Activated naive CD4-positive, alpha-beta T cell treated with anti-CD3 and anti-CD28 coated beads for 36 hours (primary cell): ENCODE measurements at regions of chr14 and their contacts with region 1.

Region 1: DNA sequence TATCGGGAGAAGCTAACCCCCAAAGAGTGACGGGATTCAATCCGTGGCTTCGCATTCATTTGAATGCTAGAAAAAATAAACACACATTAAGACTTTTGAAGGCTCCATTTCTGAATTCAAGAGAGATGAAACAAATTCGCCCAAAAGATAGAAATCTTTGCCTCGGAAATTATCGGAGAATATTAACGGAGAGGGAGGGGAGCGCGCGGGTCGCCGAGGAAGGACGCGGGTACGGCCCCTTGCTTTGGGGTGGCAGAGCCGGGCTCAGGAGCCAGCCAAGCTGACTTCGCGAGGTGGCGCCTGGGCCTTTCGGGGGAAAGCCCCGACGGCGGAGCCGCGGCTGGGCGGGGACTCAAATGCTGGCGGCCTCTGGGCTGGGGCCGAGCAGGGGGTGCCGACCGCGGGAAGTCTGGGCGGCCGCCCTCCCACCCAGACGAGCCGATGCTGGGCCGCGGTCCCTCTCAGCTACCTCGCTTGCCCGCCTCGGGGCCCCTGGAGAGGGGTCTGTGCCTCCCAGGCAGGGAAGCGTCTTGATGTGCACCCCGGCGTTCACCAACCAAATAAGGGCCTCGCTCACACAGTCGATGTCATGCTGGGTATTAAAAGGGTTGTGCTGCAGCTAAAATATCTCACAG is 14.7 kb downstream of the NKX2-1 start:
- DNase-seq: no peak
- H3K4me3 Mint-ChIP-seq: peak overlapping the region; percentile 11
- H3K27ac Mint-ChIP-seq: no peak overlapping the region
- H3K4me1 Mint-ChIP-seq: peaks cover 26% of the 10 kb centered on the region
- H3K27me3 Mint-ChIP-seq: peaks cover 71% of the 10 kb centered on the region

Region 2: DNA sequence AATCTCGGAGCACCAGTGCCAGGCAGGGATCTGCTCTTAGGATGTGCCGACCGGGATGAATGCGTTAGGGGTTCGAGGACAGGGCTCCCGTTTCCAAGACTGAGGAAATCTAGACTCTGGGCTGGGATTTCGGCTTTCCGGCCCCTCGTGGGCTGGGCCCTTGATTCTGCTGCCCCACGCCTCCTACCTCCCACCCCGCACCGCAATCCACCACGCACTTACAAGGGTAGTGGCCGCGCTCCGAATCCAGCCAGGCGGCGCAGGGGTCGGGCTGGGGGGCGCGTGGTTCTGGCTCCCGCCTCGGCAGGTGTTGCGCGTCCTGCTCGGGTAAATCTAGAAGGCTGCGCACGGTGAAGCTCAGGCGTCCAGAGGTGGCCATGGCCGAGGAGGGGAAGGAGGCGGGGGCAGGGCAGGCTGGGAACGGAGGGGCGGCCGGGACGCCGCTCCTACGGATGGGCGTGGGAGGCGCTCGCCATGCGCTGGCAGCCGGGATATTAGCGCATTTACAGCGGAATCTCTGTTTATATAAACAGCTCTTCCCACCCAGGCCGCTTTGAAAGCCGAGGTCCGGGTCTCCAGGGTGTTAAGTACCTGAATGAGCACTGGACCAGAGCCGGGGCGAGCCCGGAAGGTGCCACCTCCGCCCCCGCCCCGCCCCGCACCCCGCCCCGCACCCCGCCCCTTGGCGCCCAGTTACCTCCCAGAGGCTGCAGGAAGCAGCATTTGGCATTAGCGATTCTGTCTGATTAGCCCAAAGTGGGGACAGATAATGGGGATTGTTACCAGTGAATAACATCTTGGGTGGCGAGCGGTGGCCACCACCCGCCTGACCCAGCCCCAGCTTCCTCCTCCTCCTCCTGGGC is 76.9 kb after region 1 on chr14 and contains the start of gene NKX2-8:
- CTCF ChIA-PET with region 1: no interaction called
- intact Hi-C with region 1: loop called (anchors 2 kb)
- DNase-seq: no peak
- H3K4me3 Mint-ChIP-seq: no peak within 1 kb of the TSS
- H3K27ac Mint-ChIP-seq: no peak within 1 kb of the TSS
- H3K4me1 Mint-ChIP-seq: peaks cover 2% of the 10 kb centered on the region
- H3K27me3 Mint-ChIP-seq: peaks cover 76% of the 10 kb centered on the region
- total RNA-seq, gene NKX2-8: not detected